Activated naive CD8-positive, alpha-beta T cell treated with anti-CD3 and anti-CD28 coated beads, Interleukin-2, amount 10 ng/mL, durations not matched to agents 7 days and 5 days (primary cell): ENCODE measurements at regions of chr12 and their contacts with region 1.

Region 1: DNA sequence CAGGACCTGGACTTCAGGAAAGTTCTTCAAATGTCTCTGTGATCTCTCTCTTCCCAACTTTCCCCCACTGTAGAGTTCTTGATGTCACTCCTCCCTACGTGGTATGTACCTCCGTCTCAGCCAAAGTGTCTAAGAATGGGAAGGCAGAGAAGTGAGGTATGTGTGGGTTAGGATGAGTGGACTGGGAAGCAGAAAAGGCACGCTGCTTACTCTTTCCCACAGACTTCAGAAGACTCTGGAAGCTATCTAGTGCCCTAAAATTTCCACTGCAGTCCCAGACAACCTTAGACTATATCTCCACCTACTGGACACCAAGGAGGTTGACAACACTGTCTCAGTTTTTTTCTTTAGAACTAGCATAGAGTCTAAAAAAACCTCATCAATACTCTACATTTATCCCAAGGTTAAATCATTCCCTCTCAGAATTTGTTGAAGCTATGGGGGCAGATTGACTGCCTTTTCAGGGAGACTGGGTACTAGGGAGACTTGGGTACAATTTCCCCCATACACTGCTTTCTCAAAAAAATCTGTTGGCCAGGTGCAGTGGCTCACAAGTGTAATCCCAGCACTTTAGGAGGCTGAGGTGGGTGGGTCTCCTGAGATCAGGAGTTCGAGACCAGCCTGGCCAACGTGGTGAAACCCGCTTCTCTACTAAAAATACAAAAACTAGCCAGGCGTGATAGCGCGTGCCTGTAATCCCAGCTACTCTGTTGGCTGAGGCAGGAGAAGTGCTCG is 20.6 kb upstream of the ITGA5 start:
- DNase-seq: no peak
- ATAC-seq: peak; percentile 79
- H3K4me3 Mint-ChIP-seq: no peak overlapping the region
- H3K27ac Mint-ChIP-seq: no peak overlapping the region
- H3K4me1 Mint-ChIP-seq: peaks cover 10% of the 10 kb centered on the region
- H3K27me3 Mint-ChIP-seq: peaks cover 25% of the 10 kb centered on the region

Region 2: DNA sequence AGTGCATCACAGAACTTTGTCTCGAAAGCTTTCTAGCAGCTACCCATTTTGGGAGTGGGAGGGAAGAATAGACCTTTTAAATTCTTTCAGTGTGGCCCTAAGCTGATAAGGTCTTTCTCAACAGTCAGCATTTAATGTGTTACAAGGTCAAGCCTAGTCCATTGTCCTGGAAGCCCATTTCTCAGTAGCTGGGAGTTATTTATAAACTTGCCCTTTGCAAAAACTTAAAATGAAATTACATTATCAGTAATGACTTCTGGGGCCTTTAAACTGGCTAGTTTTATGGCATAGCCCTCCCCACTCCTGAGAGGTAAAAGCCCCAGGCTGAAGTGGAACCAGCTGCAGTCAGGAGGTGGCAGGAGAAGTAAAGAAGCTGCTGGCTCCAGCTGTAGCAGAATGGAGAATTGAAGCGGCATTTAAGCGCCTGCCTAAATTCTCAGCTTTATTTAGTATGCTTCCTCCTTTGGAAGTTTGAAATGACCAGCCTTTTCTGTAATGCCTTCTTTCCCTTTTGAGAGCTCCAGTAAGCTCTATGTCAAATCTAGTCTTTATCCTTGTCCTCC is 102.3 kb before region 1 on chr12:
- POLR2A ChIA-PET with region 1: no interaction called
- DNase-seq: no peak
- ATAC-seq: no peak
- H3K4me3 Mint-ChIP-seq: no peak overlapping the region
- H3K27ac Mint-ChIP-seq: no peak overlapping the region
- H3K4me1 Mint-ChIP-seq: peaks cover 6% of the 10 kb centered on the region
- H3K27me3 Mint-ChIP-seq: no peaks in the 10 kb centered on the region

Region 3: DNA sequence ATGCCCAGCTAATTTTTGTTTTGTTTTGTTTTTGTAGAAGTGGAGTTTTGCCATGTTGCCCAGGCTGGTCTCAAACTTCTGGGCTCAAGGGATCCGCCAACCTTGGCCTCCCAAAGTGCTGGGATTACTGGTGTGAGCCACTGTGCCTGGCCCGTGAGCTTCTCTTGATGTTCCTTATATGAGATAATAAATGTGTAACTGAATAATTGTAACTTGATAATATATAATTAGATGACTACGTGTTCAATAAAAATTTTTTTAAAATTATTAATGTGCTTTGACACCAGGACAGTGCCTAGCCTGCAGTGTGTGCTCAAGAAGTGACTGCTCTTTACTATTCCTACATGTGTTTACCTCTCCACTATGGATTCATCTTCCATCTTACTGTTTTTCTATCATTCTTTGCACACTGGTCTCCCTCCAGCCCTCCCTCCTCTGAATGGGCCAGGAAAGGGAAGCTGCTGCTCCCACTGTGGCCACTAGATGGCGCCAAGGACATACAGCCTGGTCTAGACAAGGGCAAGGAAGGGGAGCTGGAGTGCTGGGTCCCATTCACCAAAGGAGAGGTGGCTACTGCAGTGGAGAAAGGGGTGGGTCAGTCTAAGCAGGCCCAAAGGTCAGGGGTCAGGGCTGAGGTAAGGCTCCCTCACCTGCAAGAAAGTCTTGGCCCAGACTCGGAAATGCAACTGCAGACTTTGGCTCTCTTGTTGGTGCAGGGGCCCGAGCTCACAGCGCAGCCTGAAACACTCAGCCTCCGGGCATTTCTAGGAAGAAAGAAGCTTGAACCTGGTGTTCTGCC is 40.5 kb before region 1 on chr12:
- POLR2A ChIA-PET with region 1: interaction called, 15 read pairs
- DNase-seq: peak; percentile 86
- ATAC-seq: peak; percentile 89
- H3K4me3 Mint-ChIP-seq: no peak overlapping the region
- H3K27ac Mint-ChIP-seq: no peak overlapping the region
- H3K4me1 Mint-ChIP-seq: peaks cover 15% of the 10 kb centered on the region
- H3K27me3 Mint-ChIP-seq: no peaks in the 10 kb centered on the region

Region 4: DNA sequence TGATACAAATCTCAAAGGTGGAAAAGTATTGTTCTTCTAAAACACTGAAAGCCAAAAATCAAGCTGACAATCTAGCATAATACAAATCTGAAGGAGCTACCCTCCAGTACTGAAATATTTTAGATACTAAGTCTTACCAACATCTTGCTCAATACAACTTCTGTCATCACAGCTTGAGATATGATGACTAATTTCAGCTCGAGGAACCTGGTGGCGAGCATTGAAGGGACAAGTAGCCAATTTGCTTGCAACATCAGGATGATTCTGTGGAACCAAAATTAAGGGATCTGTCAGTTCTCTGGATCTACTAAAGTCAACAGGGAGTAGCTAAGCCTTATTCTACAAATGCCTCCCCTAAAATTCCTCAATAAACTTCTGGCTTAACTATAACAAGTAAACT is 23.3 kb after region 1 on chr12:
- POLR2A ChIA-PET with region 1: no interaction called
- DNase-seq: no peak
- ATAC-seq: no peak
- H3K4me3 Mint-ChIP-seq: no peak overlapping the region
- H3K27ac Mint-ChIP-seq: no peak overlapping the region
- H3K4me1 Mint-ChIP-seq: no peaks in the 10 kb centered on the region
- H3K27me3 Mint-ChIP-seq: peaks cover 41% of the 10 kb centered on the region

Region 5: DNA sequence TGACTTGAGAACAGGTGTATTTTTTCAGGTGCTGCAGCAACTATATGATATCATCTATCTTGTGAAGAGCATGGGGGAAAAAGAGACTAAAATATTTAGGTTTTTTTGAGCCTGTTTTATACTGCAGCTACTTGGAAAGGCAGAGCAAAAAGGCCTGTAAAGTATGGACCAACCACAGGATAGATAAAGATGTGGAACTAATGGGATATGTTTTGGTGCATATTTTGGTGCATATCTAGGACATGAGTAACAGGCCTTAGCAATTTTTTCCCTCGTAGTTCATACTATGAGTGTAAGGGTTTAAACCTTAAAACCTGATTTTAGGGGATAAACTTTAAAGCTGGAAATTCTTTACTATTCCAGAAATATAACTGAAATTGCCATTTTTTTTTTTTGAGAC is 39.7 kb after region 1 on chr12:
- POLR2A ChIA-PET with region 1: no interaction called
- DNase-seq: no peak
- ATAC-seq: no peak
- H3K4me3 Mint-ChIP-seq: no peak overlapping the region
- H3K27ac Mint-ChIP-seq: no peak overlapping the region
- H3K4me1 Mint-ChIP-seq: no peaks in the 10 kb centered on the region
- H3K27me3 Mint-ChIP-seq: peaks cover 15% of the 10 kb centered on the region